PC-3 (cell line): ENCODE measurements at regions of chr20 and their contacts with region 1.

Region 1: DNA sequence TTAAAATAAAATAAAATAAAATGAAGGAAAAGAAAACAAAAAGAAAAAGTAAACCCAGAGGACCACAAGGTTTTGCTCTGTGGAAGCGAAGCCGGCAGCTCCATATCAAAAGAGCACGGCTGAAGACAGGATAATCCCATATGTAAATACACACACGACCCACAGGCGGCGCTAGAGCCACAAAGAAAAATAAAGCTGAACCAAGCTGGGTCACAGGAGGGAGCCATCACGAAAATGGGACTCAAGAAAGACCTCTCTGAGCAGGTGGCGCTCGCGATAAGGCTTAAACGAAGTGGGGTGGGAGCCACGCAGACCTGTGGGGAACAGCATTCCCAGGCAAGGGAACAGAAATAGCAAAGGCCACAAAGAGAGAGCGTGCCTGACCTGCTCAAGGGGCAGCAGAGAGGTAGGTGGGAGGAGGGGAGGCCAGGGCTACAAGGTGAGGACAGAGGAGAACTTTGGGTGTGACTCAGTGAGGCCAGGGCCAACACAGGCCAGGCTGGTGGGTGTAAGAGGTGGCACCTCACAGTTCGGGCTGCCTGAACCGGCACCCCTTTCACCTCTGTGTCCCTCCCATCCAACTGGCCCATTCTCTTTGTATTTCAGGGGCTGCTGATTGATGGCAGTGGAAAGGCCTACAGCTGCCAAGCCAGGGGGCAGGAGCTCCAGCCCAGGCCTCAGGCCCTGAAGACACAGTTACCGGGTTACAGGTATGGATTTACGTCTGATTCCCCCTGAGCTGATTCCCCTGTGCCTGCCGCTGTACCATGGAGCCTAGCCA is 26.0 kb downstream of the PTGIS start:
- DNase-seq: peak; percentile 92
- ATAC-seq: peak; percentile 89
- H3K4me3 ChIP-seq: no peak overlapping the region
- H3K27ac ChIP-seq: no peak overlapping the region
- H3K4me1 ChIP-seq: no peaks in the 10 kb centered on the region
- H3K27me3 ChIP-seq: no peaks in the 10 kb centered on the region
- CTCF ChIP-seq: peak; percentile 99

Region 2: GRCh38 chr20:49046087-49046900 is 495.6 kb before region 1 on chr20 and contains the start of gene CSE1L:
- CTCF ChIA-PET with region 1: no interaction called
- POLR2A ChIA-PET with region 1: no interaction called
- intact Hi-C with region 1: no loop called
- DNase-seq: peak; percentile 99
- ATAC-seq: peak; percentile 92
- H3K4me3 ChIP-seq: peak within 1 kb of the TSS; percentile 96
- H3K27ac ChIP-seq: peak within 1 kb of the TSS; percentile 73
- H3K4me1 ChIP-seq: peaks cover 25% of the 10 kb centered on the region
- H3K27me3 ChIP-seq: no peaks in the 10 kb centered on the region
- CTCF ChIP-seq: no peak
- total RNA-seq, gene CSE1L: 272 and 295 TPM in 2 replicates

Region 3: DNA sequence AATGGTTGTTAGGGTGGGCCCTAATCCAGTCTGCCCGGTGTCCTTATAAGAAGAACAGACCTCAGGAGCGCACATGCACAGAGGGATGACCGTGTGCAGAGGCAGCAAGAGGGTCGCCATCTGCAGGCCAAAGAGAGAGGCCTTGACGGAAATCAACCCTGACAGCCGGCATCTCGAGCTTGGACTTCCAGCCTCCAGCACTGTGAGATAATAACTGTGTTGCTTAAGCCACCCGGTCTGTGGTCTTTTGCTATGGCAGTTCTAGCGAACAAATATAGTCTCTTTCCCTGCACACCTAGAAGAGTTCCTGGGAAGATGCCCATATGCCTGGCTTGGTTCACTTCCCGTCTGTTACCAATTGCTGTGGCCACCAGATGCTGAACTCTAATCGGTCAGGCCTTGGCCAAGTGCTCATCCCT is 61.3 kb after region 1 on chr20:
- CTCF ChIA-PET with region 1: interaction called, 64 read pairs
- POLR2A ChIA-PET with region 1: no interaction called
- intact Hi-C with region 1: no loop called
- DNase-seq: peak; percentile 43
- ATAC-seq: no peak
- H3K4me3 ChIP-seq: no peak overlapping the region
- H3K27ac ChIP-seq: no peak overlapping the region
- H3K4me1 ChIP-seq: peaks cover 18% of the 10 kb centered on the region
- H3K27me3 ChIP-seq: no peaks in the 10 kb centered on the region
- CTCF ChIP-seq: peak; percentile 68

Region 4: GRCh38 chr20:49757597-49757996 is 215.7 kb after region 1 on chr20:
- CTCF ChIA-PET with region 1: interaction called, 10 read pairs
- POLR2A ChIA-PET with region 1: no interaction called
- intact Hi-C with region 1: no loop called
- DNase-seq: no peak
- ATAC-seq: no peak
- H3K4me3 ChIP-seq: no peak overlapping the region
- H3K27ac ChIP-seq: no peak overlapping the region
- H3K4me1 ChIP-seq: peaks cover 16% of the 10 kb centered on the region
- H3K27me3 ChIP-seq: no peaks in the 10 kb centered on the region
- CTCF ChIP-seq: no peak

Region 5: GRCh38 chr20:49888345-49888966 is 346.5 kb after region 1 on chr20:
- CTCF ChIA-PET with region 1: no interaction called
- POLR2A ChIA-PET with region 1: no interaction called
- intact Hi-C with region 1: loop called (anchors 1 kb)
- DNase-seq: peak; percentile 78
- ATAC-seq: peak; percentile 77
- H3K4me3 ChIP-seq: no peak overlapping the region
- H3K27ac ChIP-seq: no peak overlapping the region
- H3K4me1 ChIP-seq: 0 out of 2 replicates have a peak, but pooled peaks cover 5% of the 10 kb centered on the region
- H3K27me3 ChIP-seq: no peaks in the 10 kb centered on the region
- CTCF ChIP-seq: peak; percentile 98